ENCODE measurements at regions of chr21 and their contacts with region 1.

Region 1: DNA sequence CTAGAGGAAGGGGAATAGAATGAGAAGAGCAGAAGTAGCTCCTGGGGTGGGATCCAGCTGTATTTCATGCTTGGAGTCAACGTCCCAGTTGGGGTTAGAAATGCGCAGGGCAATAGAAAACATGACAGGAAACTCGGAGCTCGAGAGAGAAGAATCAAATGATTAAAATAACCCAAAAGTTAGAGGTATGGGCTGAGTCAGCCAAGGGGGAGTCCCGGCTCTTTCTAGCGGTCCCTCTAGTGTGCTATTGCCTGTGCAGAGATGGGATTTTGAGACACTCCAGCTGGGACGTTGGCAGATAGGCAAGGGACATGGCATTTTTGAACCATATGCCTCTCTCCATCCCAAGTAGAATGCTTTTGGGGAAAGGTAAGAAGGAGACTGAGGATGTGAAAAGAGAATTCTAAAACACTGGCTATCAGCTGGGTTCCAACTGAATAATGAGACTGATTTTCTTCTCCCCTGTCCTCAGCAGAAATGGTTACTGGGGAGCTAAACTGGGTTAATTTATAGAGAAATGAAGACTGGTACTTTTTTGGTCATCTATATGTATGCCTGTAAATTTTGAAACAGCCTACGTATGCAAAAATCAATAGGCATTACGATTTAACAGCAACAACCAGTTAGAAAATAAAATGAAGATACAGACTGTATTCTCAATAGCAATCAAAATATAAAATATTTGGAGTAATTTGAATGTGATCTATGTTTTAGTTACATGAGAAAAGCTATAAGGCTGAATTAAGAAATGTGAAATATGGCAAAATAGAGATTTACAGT is 7.0 kb upstream of the VPS26C start:
- DNase-seq: no peak
- ATAC-seq: no peak
- H3K4me3 ChIP-seq: no peak overlapping the region
- H3K27ac ChIP-seq: no peak overlapping the region
- H3K4me1 ChIP-seq: no peaks in the 10 kb centered on the region
- H3K27me3 ChIP-seq: no peaks in the 10 kb centered on the region
- CTCF ChIP-seq: no peak
- POLR2A ChIP-seq: no peak

Region 2: GRCh38 chr21:36419996-36420395 is 854.1 kb before region 1 on chr21:
- in situ Hi-C with region 1: no loop called
- intact Hi-C with region 1: no loop called
- DNase-seq: peak; percentile 77 to 84
- ATAC-seq: peak; percentile 90 to 94
- H3K4me3 ChIP-seq: no peak overlapping the region
- H3K27ac ChIP-seq: peak overlapping the region in 1 of 4 donors; percentile 30
- H3K4me1 ChIP-seq: peaks cover 0 to 3% of the 10 kb centered on the region in 2 donors
- H3K27me3 ChIP-seq: no peaks in the 10 kb centered on the region
- CTCF ChIP-seq: peak; percentile 76 to 84 (median 81)
- POLR2A ChIP-seq: no peak

Region 3: GRCh38 chr21:37009740-37010341 is 264.3 kb before region 1 on chr21:
- in situ Hi-C with region 1: no loop called
- intact Hi-C with region 1: no loop called
- DNase-seq: peak; percentile 62 to 68
- ATAC-seq: peak; percentile 95 to 98
- H3K4me3 ChIP-seq: peak overlapping the region in 3 of 4 donors; percentile 23 to 40 (median 33)
- H3K27ac ChIP-seq: no peak overlapping the region
- H3K4me1 ChIP-seq: peaks cover 3 to 11% of the 10 kb centered on the region in 2 donors
- H3K27me3 ChIP-seq: peaks cover 25 to 34% (median 32%) of the 10 kb centered on the region in 3 donors
- CTCF ChIP-seq: peak; percentile 61 to 84 (median 73)
- POLR2A ChIP-seq: no peak

Region 4: DNA sequence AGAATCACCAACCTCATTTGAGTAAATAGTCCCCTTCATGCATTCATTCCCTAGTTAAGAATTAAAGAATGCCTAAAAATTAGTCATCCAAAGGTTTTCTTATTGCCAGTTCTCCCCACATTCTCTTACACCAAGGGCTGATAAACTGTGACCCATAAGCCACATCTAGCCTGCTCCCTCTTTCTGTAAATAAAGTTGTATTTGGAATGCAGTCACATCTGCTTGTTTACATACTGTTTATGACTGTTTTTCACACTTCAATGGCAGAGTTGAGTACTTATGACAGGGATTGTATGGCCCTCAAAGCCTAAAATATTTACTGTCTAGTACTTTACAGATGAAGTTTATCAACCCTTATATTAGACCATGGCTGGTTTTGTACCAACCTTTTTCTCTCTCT is 76.4 kb after region 1 on chr21:
- in situ Hi-C with region 1: loop called in 2 of 4 experiments (anchors 5 to 25 kb)
- intact Hi-C with region 1: no loop called
- DNase-seq: no peak
- ATAC-seq: no peak
- H3K4me3 ChIP-seq: no peak overlapping the region
- H3K27ac ChIP-seq: no peak overlapping the region
- H3K4me1 ChIP-seq: no peaks in the 10 kb centered on the region
- H3K27me3 ChIP-seq: no peaks in the 10 kb centered on the region
- CTCF ChIP-seq: no peak
- POLR2A ChIP-seq: no peak

Region 5: DNA sequence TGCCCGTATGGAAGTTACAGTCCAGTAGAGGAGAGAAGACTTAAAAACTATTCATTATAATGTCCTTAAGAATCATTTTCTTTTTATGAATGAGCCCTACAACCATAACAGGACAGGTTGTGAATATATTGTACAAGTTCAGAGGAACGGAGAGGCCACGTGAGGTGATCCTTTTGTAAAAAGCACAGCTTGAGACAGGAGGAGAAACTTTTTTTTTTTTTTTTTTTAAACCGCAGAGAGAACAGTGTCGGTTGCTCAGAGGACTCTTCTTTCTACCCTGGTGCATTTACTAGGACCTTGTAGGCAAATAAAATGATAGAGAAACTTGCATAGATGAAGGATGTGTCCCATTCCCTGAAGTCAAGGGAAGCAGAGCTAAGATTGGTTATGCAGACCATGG is 124.6 kb after region 1 on chr21:
- in situ Hi-C with region 1: no loop called
- intact Hi-C with region 1: no loop called
- DNase-seq: no peak
- ATAC-seq: no peak
- H3K4me3 ChIP-seq: no peak overlapping the region
- H3K27ac ChIP-seq: peak overlapping the region in 1 of 4 donors; percentile 1
- H3K4me1 ChIP-seq: peaks cover 58 to 77% of the 10 kb centered on the region in 2 donors
- H3K27me3 ChIP-seq: no peaks in the 10 kb centered on the region
- CTCF ChIP-seq: no peak
- POLR2A ChIP-seq: no peak

Measured in gastrocnemius medialis (tissue), 4 donors.